ENCODE measurements at regions of chr12 and their contacts with region 1.

Region 1: GRCh38 chr12:79737875-79738718 is 47.3 kb upstream of the PAWR start:
- DNase-seq: peak; percentile 24 to 31
- H3K4me3 ChIP-seq: no peak overlapping the region
- H3K27ac ChIP-seq: no peak overlapping the region
- H3K4me1 ChIP-seq: no peaks in the 10 kb centered on the region
- H3K27me3 ChIP-seq: no peaks in the 10 kb centered on the region
- CTCF ChIP-seq: peak; percentile 9 to 85 (median 62)
- POLR2A ChIP-seq: no peak

Region 2: DNA sequence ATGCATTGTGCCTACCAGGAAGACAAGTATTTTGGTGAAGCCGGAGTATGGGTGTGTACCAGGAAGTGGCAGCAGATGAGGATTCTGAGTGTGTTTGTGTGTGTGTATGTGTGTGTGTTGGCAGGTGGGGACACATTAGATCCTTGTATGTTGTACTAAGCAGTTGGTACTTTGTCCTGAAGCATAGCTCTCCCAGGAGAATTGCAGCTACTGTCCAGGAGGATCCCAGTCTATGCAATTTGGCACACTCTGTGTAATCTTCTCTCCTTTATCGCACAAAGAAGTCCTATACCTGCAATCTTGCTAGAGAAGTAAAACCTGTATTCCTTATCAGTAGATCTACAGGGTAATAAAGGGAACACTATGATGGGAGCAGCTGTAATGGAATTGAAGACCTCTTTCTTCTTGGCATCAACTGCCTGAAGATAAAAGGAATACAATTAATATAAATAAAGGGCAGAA is 323.8 kb before region 1 on chr12:
- intact Hi-C with region 1: loop called (anchors 5 kb)
- DNase-seq: no peak
- H3K4me3 ChIP-seq: no peak overlapping the region
- H3K27ac ChIP-seq: no peak overlapping the region
- H3K4me1 ChIP-seq: peaks cover 9 to 11% of the 10 kb centered on the region in 2 donors
- H3K27me3 ChIP-seq: no peaks in the 10 kb centered on the region
- CTCF ChIP-seq: no peak
- POLR2A ChIP-seq: no peak